Activated CD8-positive, alpha-beta T cell treated with anti-CD3 and anti-CD28 coated beads for 36 hours (primary cell): ENCODE measurements at regions of chr13 and their contacts with region 1.

Region 1: DNA sequence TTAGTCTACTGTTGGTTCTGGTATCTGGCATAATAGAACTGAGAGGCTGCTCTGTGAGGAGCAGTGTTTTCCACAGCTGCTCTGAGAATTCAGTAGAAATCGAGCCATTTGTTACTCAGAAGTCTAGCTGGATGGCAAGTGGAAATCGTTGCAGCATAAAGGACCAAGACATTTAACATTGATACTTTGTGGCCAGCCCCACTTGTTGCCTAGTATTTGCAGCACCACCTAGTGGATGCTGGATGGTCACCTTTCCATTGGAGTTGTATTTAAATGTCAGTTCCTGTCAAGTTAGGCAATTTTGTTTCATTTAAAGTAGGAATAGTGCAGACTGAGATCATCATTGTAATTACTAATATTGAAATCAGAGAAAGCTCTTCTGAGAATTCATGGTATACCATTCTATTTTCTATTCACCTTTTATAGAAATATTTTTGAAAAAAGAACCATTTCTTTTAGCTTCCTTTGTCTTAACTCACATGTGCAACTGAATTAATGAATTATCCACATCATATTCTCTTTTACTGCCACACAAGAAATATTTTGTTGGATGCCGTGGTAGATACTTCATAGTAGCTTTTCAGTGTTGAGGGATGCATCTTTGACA is 64.6 kb downstream of the PDS5B start:
- DNase-seq: peak; percentile 82
- ATAC-seq: peak; percentile 90
- H3K4me3 Mint-ChIP-seq: no peak overlapping the region
- H3K27ac Mint-ChIP-seq: peak overlapping the region; percentile 64
- H3K4me1 Mint-ChIP-seq: peaks cover 44% of the 10 kb centered on the region
- H3K27me3 Mint-ChIP-seq: no peaks in the 10 kb centered on the region
- CTCF ChIP-seq: peak; percentile 82

Region 2: GRCh38 chr13:32427852-32428580 is 222.8 kb before region 1 on chr13 and contains the start of gene N4BP2L1:
- CTCF ChIA-PET with region 1: no interaction called
- POLR2A ChIA-PET with region 1: no interaction called
- intact Hi-C with region 1: no loop called
- DNase-seq: peak; percentile 96
- ATAC-seq: peak; percentile 85
- H3K4me3 Mint-ChIP-seq: peak within 1 kb of the TSS; percentile 91
- H3K27ac Mint-ChIP-seq: peak within 1 kb of the TSS; percentile 98
- H3K4me1 Mint-ChIP-seq: peaks cover 33% of the 10 kb centered on the region
- H3K27me3 Mint-ChIP-seq: no peaks in the 10 kb centered on the region
- CTCF ChIP-seq: no peak
- total RNA-seq, gene N4BP2L1: 26.2 to 32.2 TPM

Region 3: GRCh38 chr13:32609428-32609827 is 41.4 kb before region 1 on chr13:
- CTCF ChIA-PET with region 1: interaction called, 10 read pairs
- POLR2A ChIA-PET with region 1: no interaction called
- intact Hi-C with region 1: no loop called
- DNase-seq: no peak
- ATAC-seq: no peak
- H3K4me3 Mint-ChIP-seq: no peak overlapping the region
- H3K27ac Mint-ChIP-seq: no peak overlapping the region
- H3K4me1 Mint-ChIP-seq: peaks cover 51% of the 10 kb centered on the region
- H3K27me3 Mint-ChIP-seq: no peaks in the 10 kb centered on the region
- CTCF ChIP-seq: no peak

Region 4: GRCh38 chr13:32669030-32669646 is 18.3 kb after region 1 on chr13:
- CTCF ChIA-PET with region 1: interaction called, 48 read pairs
- POLR2A ChIA-PET with region 1: interaction called, 6 read pairs
- intact Hi-C with region 1: no loop called
- DNase-seq: peak; percentile 21
- ATAC-seq: peak; percentile 56
- H3K4me3 Mint-ChIP-seq: no peak overlapping the region
- H3K27ac Mint-ChIP-seq: no peak overlapping the region
- H3K4me1 Mint-ChIP-seq: peaks cover 7% of the 10 kb centered on the region
- H3K27me3 Mint-ChIP-seq: no peaks in the 10 kb centered on the region
- CTCF ChIP-seq: peak; percentile 56

Region 5: DNA sequence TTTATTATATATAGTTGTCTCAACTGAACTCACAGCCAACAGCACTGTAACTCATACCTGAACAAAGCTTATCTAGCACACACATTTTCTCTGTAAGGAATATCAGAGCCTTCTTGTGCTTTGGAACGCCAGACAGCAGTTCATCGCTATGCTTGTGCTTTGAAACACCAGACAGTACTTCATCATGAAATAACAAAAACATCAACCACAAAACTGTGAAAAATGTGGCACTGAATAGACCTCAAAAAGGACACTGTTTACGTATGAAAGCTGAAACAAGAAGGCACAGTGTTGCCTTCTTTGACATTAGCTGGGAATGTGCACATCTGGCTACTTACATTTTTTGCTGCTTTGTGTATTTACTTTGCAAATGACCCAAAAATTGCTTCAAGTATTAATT is 95.7 kb after region 1 on chr13:
- CTCF ChIA-PET with region 1: no interaction called
- POLR2A ChIA-PET with region 1: no interaction called
- intact Hi-C with region 1: no loop called
- DNase-seq: no peak
- ATAC-seq: no peak
- H3K4me3 Mint-ChIP-seq: no peak overlapping the region
- H3K27ac Mint-ChIP-seq: no peak overlapping the region
- H3K4me1 Mint-ChIP-seq: no peaks in the 10 kb centered on the region
- H3K27me3 Mint-ChIP-seq: no peaks in the 10 kb centered on the region
- CTCF ChIP-seq: no peak